Psoas muscle (tissue), 8 donors: ENCODE measurements at regions of chr9 and their contacts with region 1.

Region 1: DNA sequence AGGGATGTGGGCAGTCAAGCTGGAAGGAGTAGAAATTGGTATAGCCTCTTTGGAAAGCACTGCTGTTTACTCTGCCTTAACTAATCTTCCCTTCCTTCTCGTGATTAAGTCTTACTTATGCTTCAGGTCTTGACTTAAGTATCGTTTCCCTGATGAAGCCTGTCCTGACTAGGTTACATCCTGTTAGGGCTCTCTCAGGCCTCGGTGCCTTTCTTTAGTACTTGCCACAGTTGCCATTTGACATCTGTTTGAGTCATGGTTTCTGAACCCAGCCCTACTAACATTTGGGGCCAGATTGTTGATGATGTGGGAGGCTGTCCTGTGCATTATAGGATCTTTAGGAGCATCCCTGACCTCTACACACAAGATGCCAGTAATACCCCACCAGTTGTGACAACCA is 94.4 kb downstream of the GAPVD1 start:
- DNase-seq: no peak
- ATAC-seq: no peak
- H3K4me3 ChIP-seq: no peak overlapping the region
- H3K27ac ChIP-seq: no peak overlapping the region
- H3K4me1 ChIP-seq: no peaks in the 10 kb centered on the region
- H3K27me3 ChIP-seq: no peaks in the 10 kb centered on the region
- CTCF ChIP-seq: no peak

Region 2: GRCh38 chr9:125189361-125190289 is 166.4 kb before region 1 on chr9 and contains the start of gene PPP6C:
- intact Hi-C with region 1: no loop called
- DNase-seq: peak; percentile 98 to 99
- ATAC-seq: peak; percentile 96 to 99 (median 98)
- H3K4me3 ChIP-seq: peak within 1 kb of the TSS; percentile 92
- H3K27ac ChIP-seq: peak within 1 kb of the TSS; percentile 99
- H3K4me1 ChIP-seq: peaks cover 46% of the 10 kb centered on the region
- H3K27me3 ChIP-seq: no peaks in the 10 kb centered on the region
- CTCF ChIP-seq: peak; percentile 57
- total RNA-seq, gene PPP6C: 51.4 to 91.6 (median 66.6) TPM

Region 3: GRCh38 chr9:125233678-125234077 is 122.4 kb before region 1 on chr9:
- intact Hi-C with region 1: no loop called
- DNase-seq: no peak
- ATAC-seq: peak; percentile 73 to 81 (median 80)
- H3K4me3 ChIP-seq: no peak overlapping the region
- H3K27ac ChIP-seq: peak overlapping the region; percentile 30
- H3K4me1 ChIP-seq: peaks cover 39% of the 10 kb centered on the region
- H3K27me3 ChIP-seq: no peaks in the 10 kb centered on the region
- CTCF ChIP-seq: no peak

Region 4: GRCh38 chr9:125293134-125293533 is 62.9 kb before region 1 on chr9:
- intact Hi-C with region 1: no loop called
- DNase-seq: no peak
- ATAC-seq: peak; percentile 32 to 50 (median 44)
- H3K4me3 ChIP-seq: no peak overlapping the region
- H3K27ac ChIP-seq: no peak overlapping the region
- H3K4me1 ChIP-seq: peaks cover 6% of the 10 kb centered on the region
- H3K27me3 ChIP-seq: no peaks in the 10 kb centered on the region
- CTCF ChIP-seq: no peak

Region 5: GRCh38 chr9:125308683-125309082 is 47.3 kb before region 1 on chr9:
- intact Hi-C with region 1: loop called in 1 of 2 experiments (anchors 5 kb)
- DNase-seq: no peak
- ATAC-seq: no peak
- H3K4me3 ChIP-seq: no peak overlapping the region
- H3K27ac ChIP-seq: no peak overlapping the region
- H3K4me1 ChIP-seq: no peaks in the 10 kb centered on the region
- H3K27me3 ChIP-seq: no peaks in the 10 kb centered on the region
- CTCF ChIP-seq: no peak

Region 6: GRCh38 chr9:125407974-125408900 is 52.2 kb after region 1 on chr9:
- intact Hi-C with region 1: no loop called
- DNase-seq: peak; percentile 83 to 86
- ATAC-seq: peak; percentile 76 to 91 (median 86)
- H3K4me3 ChIP-seq: peak overlapping the region; percentile 68
- H3K27ac ChIP-seq: no peak overlapping the region
- H3K4me1 ChIP-seq: peaks cover 3% of the 10 kb centered on the region
- H3K27me3 ChIP-seq: peaks cover 0 to 17% (median 4%) of the 10 kb centered on the region in 3 donors
- CTCF ChIP-seq: peak; percentile 74